ENCODE measurements at regions of chrX and their contacts with region 1.

Region 1: DNA sequence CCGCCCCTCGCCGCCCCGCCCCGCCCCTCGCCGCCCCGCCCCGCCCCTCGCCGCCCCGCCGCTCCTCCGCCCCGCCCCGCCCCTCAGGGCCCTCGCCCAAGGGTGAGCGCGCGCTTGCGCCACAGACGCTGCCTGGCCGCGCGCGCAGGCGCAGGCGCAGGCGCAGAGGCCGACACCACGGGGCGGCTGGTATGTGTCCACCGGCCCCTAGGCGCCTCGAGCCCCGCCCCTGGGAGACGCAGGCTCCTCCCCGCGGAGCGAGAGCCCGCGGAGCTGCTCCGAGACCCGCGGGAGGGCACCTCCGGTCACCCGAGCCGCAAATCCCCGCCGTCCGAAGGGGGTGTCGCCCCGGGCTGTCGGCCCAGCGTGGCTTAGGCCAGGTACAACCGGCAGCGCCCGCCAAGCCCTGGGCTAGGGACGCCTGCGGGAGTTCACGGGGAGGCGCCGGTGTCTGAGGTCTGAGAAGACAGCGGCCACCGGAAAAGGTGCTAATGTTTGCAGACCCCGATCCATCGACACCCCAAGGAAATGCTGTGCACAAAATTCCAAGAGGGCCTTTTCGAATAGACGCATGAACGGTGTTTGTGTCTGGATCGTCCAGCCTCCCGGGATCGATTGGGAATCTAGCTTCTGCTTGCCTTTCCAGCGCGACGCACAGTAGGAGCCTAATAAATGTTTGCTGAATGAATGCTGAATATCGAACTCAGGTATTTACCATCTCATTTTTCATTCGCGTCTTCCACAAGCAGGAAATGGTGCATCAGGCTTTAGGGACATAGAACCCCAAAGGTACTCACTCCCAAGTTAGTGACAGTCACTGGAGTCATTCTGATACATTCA is 473 bp upstream of the CCNQ start:
- DNase-seq: peak; percentile 98

Region 2: DNA sequence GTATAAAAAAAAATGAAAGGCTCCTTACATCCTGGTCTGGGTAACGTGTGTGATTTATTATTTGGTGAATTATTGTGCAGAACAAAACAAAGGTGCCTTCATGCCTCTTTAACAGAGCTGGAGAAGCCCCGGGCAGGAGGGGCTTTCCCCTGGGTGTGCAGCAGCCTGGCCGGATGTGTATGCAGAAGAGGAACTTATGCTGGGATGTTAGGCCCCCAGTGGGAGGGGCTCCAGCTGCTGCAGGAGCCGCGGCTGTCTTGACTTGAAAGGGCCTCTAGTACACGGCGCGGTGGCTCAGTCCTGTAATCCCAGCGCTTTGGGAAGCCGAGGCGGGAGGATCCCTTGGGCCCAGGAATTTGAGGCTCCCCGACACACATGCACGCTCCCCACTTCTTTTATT is 16.5 kb before region 1 on chrX:
- CTCF ChIA-PET with region 1: no interaction called
- POLR2A ChIA-PET with region 1: no interaction called
- DNase-seq: no peak

Region 3: GRCh38 chrX:153609917-153610428 is 10.6 kb after region 1 on chrX:
- CTCF ChIA-PET with region 1: interaction called, 17 read pairs
- POLR2A ChIA-PET with region 1: no interaction called
- DNase-seq: peak; percentile 88

Region 4: GRCh38 chrX:153693191-153694086 is 94.0 kb after region 1 on chrX:
- CTCF ChIA-PET with region 1: no interaction called
- POLR2A ChIA-PET with region 1: no interaction called
- DNase-seq: no peak